ENCODE measurements at regions of chr12 and their contacts with region 1.

Region 1: DNA sequence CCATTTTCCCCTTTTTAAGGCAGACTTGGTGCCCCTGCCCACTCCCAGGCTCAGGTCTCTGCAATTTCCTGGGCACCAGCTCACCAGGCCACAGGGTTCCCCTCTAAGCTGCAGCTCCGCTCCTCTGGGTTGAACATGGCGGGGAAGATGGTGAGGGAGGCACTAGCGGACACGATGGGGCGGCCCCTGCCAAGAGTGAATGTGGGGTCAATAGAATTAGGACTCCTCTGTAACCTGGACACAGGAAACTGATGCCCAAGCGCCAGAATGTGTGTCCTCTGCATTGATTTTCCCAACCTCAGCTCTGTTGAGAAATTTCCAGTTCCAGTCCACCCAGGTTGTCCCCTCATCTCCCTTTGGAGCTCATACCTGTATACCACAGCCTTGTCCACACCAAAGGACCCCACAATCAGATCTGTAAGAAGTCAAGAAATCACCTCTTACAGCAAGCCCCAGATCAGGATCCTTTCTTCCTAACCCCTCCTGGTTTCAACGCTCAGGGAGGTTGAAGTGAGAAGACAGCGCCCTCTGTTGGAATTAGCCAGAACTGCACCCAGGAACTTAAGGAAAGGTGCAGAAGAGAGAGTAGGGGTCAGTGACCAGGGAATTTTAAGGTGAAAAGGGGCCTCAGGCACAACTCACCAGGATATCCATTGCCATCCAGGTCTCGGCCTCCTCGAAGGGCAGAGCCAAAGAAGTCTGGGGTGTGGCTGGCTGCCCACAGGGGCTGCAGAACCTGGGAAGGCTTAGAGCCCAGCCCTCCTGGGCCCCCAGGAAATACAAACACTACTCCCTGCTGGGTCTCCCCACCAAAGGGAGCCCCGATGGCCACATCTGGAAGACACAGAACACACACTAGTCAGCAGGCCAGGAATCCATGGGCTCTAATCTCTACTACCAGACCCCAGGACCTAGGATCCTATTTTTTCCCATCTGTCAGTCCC is 14.7 kb downstream of the ITGA5 start:
- DNase-seq: peak; percentile 83
- H3K4me3 Mint-ChIP-seq: no peak overlapping the region
- H3K27ac Mint-ChIP-seq: peak overlapping the region; percentile 50
- H3K4me1 Mint-ChIP-seq: peaks cover 10% of the 10 kb centered on the region
- H3K27me3 Mint-ChIP-seq: no peaks in the 10 kb centered on the region

Region 2: DNA sequence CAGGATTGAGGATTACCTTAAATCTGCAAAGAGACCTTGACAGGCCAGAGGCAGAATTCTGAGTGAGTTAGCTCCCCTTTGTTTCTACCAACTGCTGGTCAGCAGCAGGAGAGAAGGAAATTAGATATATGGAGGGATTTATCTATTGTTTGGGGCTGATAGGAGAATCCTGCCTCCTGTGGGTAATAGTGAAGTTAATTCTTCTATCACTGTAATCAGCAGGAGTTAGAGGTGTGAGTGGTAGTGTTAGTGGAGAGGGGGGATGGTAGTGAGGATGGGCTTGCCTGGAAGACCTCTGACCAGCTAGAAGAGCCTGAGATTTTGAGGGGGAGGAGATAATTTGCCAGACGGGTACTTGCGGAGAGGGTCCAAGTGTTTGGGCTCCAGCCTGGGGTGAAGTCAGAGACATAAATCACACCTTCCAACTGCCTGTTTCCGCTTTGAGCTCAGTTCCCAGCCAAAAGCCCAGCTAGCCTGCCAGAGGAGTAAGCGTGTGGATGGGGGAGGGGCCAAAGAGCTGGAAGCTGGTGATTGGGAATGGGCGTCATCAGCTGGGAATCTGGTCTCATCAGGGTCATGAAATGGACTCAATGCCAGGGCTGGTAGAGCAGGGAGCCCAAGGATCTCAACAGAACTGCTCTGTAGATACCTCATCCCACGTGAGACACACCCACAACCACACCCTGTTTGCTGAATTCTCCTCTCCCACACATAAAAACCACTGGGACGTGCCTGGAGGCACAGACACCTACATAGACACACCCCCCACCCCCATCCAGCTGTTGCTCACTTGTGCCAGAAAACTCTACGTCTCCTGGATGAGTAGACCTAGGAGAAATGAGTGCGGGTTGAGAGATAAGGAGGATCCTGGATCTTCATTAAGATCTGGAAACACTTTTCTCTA is 27.8 kb after region 1 on chr12:
- CTCF ChIA-PET with region 1: interaction called, 384 read pairs
- intact Hi-C with region 1: no loop called
- DNase-seq: no peak
- H3K4me3 Mint-ChIP-seq: no peak overlapping the region
- H3K27ac Mint-ChIP-seq: no peak overlapping the region
- H3K4me1 Mint-ChIP-seq: peaks cover 25% of the 10 kb centered on the region
- H3K27me3 Mint-ChIP-seq: no peaks in the 10 kb centered on the region

Region 3: GRCh38 chr12:54824402-54824801 is 420.1 kb after region 1 on chr12:
- CTCF ChIA-PET with region 1: no interaction called
- intact Hi-C with region 1: no loop called
- DNase-seq: no peak
- H3K4me3 Mint-ChIP-seq: no peak overlapping the region
- H3K27ac Mint-ChIP-seq: no peak overlapping the region
- H3K4me1 Mint-ChIP-seq: no peaks in the 10 kb centered on the region
- H3K27me3 Mint-ChIP-seq: no peaks in the 10 kb centered on the region

Measured in activated naive CD4-positive, alpha-beta T cell treated with anti-CD3 and anti-CD28 coated beads for 36 hours (primary cell).